Activated CD8-positive, alpha-beta T cell treated with anti-CD3 and anti-CD28 coated beads, Interleukin-2, amount 10 ng/mL, durations not matched to agents 7 days and 5 days (primary cell): ENCODE measurements at regions of chr15 and their contacts with region 1.

Region 1: DNA sequence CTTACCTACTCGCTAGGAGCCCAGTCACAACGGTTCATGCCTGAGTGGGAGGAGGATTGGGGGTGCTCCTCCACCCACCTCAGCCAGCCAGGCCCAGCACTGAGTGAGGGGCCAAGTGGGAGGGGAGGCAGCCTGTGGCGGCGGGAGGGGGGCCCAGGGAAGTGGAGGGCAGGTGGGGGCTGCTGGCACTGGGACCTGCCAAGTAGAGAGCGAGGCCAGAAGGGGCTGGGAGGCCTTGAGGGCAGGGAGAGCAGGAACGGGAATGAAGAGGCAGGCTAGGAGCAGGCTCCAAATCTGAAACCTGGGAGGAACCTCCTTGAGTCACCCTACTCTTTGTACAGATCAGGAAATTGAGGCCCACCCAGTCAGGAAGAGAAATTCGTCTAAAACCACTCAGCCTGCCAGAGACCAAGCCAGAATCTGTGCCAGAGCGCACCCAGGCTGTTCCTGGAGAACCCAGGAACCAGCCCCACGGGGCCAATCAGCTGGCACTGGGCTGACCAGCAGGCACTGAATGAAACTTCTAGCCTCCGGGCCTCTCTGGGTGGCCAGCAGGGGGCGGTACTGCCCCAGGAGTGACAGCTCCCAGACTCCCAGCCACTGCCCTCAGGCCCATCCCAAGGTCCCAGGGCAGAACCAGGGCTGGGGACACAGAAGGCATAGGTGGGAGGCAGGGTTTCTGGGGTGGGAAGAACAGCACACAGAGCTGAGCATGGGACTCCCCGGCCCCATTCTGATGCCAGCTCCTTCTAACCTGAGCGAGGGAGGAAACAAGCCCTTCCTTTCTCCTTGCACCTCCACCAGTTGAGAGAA is 14.8 kb upstream of the CYP11A1 start:
- DNase-seq: peak; percentile 85
- ATAC-seq: peak; percentile 57
- H3K4me3 Mint-ChIP-seq: no peak overlapping the region
- H3K27ac Mint-ChIP-seq: peak overlapping the region; percentile 54
- H3K4me1 Mint-ChIP-seq: peaks cover 66% of the 10 kb centered on the region
- H3K27me3 Mint-ChIP-seq: no peaks in the 10 kb centered on the region

Region 2: GRCh38 chr15:74396445-74397238 is 14.4 kb after region 1 on chr15:
- CTCF ChIA-PET with region 1: interaction called, 108 read pairs
- POLR2A ChIA-PET with region 1: interaction called, 55 read pairs
- DNase-seq: no peak
- ATAC-seq: no peak
- H3K4me3 Mint-ChIP-seq: no peak overlapping the region
- H3K27ac Mint-ChIP-seq: peak overlapping the region; percentile 81
- H3K4me1 Mint-ChIP-seq: peaks cover 88% of the 10 kb centered on the region
- H3K27me3 Mint-ChIP-seq: no peaks in the 10 kb centered on the region

Region 3: DNA sequence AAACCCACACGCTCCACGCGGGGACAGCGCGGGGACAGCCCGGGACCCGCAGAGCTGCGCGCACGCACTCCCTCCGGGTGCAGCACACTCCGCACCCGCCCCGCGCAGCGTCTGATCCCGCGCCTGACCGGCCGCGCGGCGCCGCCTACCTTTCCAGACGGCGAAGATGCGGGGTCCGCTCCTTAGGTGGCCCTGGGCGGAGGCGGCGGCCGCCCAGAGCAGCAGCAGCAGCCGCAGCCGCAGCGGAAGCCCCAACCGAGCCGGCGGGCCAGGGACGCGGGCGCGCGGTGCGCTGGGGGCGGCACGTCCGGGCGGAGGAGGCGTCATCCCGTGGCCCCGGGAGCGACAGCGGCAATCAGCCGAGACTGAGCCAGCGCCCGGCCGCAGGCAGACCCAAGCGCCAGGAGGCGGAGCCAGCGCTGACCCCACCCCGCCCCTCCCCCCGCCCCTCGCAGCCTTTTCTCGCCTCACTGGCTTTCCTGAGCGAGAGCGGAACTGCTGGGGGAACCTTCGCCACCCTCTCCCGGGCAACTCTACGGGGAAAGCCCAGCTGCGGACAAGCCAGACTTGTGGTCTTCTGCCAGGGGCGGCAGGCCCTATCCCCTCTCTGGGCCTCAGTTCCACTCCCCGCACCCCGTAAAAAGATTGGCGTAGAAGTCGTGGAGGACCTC is 51.5 kb after region 1 on chr15 and contains the start of gene SEMA7A:
- CTCF ChIA-PET with region 1: interaction called, 677 read pairs
- POLR2A ChIA-PET with region 1: interaction called, 35 read pairs
- DNase-seq: peak; percentile 88
- ATAC-seq: peak; percentile 90
- H3K4me3 Mint-ChIP-seq: peak within 1 kb of the TSS; percentile 83
- H3K27ac Mint-ChIP-seq: peak within 1 kb of the TSS; percentile 88
- H3K4me1 Mint-ChIP-seq: peaks cover 76% of the 10 kb centered on the region
- H3K27me3 Mint-ChIP-seq: no peaks in the 10 kb centered on the region
- total RNA-seq, gene SEMA7A: 16.1 to 16.9 TPM

Region 4: DNA sequence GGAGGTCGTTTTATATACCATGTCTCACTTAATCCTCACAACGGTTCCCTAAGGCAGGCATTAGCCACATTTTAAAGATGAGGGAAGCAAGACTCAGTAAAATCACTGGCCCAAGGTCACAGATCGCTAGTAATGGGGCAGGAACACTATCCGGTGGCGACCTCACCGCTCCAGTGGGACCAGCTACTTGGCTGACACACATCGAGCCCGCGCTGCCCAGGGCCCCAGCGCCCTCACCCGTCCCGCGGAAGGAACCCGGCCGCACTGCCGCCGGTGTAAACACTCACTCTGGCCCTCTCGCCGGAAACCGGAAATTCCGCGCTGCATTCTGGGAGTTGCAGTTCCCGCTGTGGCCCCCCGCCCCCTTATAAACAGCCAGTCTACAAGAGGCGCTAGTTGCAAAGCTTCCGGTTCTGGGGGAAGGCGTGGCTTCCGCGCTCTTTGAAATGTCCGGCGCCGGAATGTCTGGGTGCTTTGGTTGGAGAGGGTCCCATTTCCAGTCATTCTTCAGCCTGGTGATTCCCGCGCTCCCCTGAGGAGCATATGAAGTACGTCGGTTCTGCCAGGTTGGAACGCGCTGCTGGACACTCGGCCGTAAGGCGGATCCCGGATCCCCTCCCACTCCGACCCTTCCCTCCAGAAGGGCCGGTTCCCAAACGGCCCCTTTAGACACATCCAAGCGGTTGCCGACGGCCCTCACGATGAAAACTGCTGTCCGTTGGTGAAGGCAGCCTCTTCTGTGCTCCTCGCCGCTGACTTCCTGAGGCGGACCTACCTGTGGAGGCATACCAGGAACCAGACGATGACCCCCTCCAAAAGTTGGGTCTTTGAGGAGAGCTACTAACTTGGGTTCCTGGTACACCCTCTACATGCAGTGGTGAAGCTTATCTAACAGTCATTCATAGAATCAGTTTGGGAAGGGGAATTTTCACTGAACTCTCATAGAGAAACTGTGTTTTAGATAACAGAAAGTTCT is 78.9 kb after region 1 on chr15 and contains the start of gene UBL7:
- CTCF ChIA-PET with region 1: interaction called, 7 read pairs
- POLR2A ChIA-PET with region 1: interaction called, 14 read pairs
- DNase-seq: peak; percentile 99
- ATAC-seq: peak; percentile 95
- H3K4me3 Mint-ChIP-seq: peak within 1 kb of the TSS; percentile 89
- H3K27ac Mint-ChIP-seq: peak within 1 kb of the TSS; percentile 81
- H3K4me1 Mint-ChIP-seq: peaks cover 54% of the 10 kb centered on the region
- H3K27me3 Mint-ChIP-seq: no peaks in the 10 kb centered on the region
- total RNA-seq, gene UBL7: 60.8 to 71.4 TPM

Region 5: GRCh38 chr15:74519311-74519710 is 137.1 kb after region 1 on chr15:
- CTCF ChIA-PET with region 1: no interaction called
- POLR2A ChIA-PET with region 1: no interaction called
- DNase-seq: no peak
- ATAC-seq: no peak
- H3K4me3 Mint-ChIP-seq: no peak overlapping the region
- H3K27ac Mint-ChIP-seq: no peak overlapping the region
- H3K4me1 Mint-ChIP-seq: no peaks in the 10 kb centered on the region
- H3K27me3 Mint-ChIP-seq: no peaks in the 10 kb centered on the region

Region 6: GRCh38 chr15:74540761-74541493 is 158.7 kb after region 1 on chr15 and contains the start of gene ARID3B:
- CTCF ChIA-PET with region 1: interaction called, 14 read pairs
- POLR2A ChIA-PET with region 1: interaction called, 8 read pairs
- DNase-seq: peak; percentile 99
- ATAC-seq: peak; percentile 92
- H3K4me3 Mint-ChIP-seq: peak within 1 kb of the TSS; percentile 98
- H3K27ac Mint-ChIP-seq: peak within 1 kb of the TSS; percentile 99
- H3K4me1 Mint-ChIP-seq: peaks cover 57% of the 10 kb centered on the region
- H3K27me3 Mint-ChIP-seq: no peaks in the 10 kb centered on the region
- total RNA-seq, gene ARID3B: 39.8 to 40.1 TPM

Region 7: GRCh38 chr15:74615508-74616365 is 233.5 kb after region 1 on chr15 and contains the start of gene CLK3:
- CTCF ChIA-PET with region 1: interaction called, 10 read pairs
- POLR2A ChIA-PET with region 1: interaction called, 3 read pairs
- DNase-seq: peak; percentile 96
- ATAC-seq: peak; percentile 82
- H3K4me3 Mint-ChIP-seq: peak within 1 kb of the TSS; percentile 98
- H3K27ac Mint-ChIP-seq: peak within 1 kb of the TSS; percentile 97
- H3K4me1 Mint-ChIP-seq: peaks cover 48% of the 10 kb centered on the region
- H3K27me3 Mint-ChIP-seq: no peaks in the 10 kb centered on the region
- total RNA-seq, gene CLK3: 125 to 128 TPM